Uterus (tissue), 4 donors: ENCODE measurements at regions of chr11 and their contacts with region 1.

Region 1: GRCh38 chr11:66282468-66283386 is 4.8 kb downstream of the CNIH2 start:
- DNase-seq: peak; percentile 95 to 96
- H3K4me3 ChIP-seq: no peak overlapping the region
- H3K27ac ChIP-seq: no peak overlapping the region
- H3K4me1 ChIP-seq: peaks cover 0 to 12% of the 10 kb centered on the region in 2 donors
- H3K27me3 ChIP-seq: no peaks in the 10 kb centered on the region
- CTCF ChIP-seq: peak; percentile 95 to 98 (median 96)
- POLR2A ChIP-seq: peak in 1 of 2 donors; percentile 35

Region 2: GRCh38 chr11:66222358-66223149 is 60.2 kb before region 1 on chr11:
- intact Hi-C with region 1: loop called (anchors 10 kb)
- DNase-seq: peak; percentile 86 to 88
- H3K4me3 ChIP-seq: no peak overlapping the region
- H3K27ac ChIP-seq: no peak overlapping the region
- H3K4me1 ChIP-seq: no peaks in the 10 kb centered on the region
- H3K27me3 ChIP-seq: no peaks in the 10 kb centered on the region
- CTCF ChIP-seq: peak; percentile 94 to 100 (median 100)
- POLR2A ChIP-seq: no peak